AG04450 (cell line): ENCODE measurements at regions of chr13 and their contacts with region 1.

Region 1: DNA sequence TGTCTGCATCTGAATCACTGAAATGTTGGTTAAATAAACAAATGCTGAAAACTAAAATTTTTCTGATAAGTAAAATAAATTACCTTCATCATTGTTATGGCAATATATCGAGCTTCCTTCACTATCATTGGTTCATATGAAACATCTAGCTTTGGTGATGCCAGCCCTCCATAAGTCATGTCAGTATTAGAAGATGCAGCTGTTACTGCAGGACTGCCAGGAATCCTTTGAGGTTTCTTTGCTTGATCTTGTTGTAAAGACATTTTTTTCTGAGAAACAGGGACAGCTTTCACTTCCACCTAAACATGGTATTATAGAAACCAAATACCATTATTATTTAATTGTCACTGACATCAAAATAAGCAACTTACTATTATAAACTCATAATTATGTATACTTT is 123.7 kb upstream of the FBXL3 start:
- DNase-seq: no peak
- H3K4me3 ChIP-seq: no peak overlapping the region
- H3K27ac ChIP-seq: no peak overlapping the region
- H3K27me3 ChIP-seq: no peaks in the 10 kb centered on the region
- CTCF ChIP-seq: no peak

Region 2: DNA sequence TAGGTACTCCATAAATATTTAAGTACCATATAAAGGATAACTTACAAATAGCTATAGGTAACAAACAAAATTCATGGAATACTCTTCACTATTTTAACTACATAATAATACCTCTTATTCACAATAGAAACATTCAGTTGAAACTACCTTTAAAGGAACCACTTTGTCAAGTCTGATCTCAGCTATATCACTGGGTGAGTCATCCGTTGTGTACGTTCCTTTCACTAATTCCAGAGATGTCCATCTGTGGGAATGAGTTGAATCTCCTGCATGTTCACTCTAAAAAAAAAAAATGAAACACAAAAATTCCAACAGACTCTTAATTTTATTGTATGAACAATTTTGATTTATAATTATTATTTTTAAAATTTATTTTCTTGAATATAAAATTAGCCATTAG is 25.7 kb after region 1 on chr13:
- CTCF ChIA-PET with region 1: no interaction called
- POLR2A ChIA-PET with region 1: interaction called, 10 read pairs
- DNase-seq: peak; percentile 42
- H3K4me3 ChIP-seq: no peak overlapping the region
- H3K27ac ChIP-seq: no peak overlapping the region
- H3K27me3 ChIP-seq: no peaks in the 10 kb centered on the region
- CTCF ChIP-seq: no peak